Naive thymus-derived CD4-positive, alpha-beta T cell (primary cell): ENCODE measurements at regions of chr5 and their contacts with region 1.

Region 1: DNA sequence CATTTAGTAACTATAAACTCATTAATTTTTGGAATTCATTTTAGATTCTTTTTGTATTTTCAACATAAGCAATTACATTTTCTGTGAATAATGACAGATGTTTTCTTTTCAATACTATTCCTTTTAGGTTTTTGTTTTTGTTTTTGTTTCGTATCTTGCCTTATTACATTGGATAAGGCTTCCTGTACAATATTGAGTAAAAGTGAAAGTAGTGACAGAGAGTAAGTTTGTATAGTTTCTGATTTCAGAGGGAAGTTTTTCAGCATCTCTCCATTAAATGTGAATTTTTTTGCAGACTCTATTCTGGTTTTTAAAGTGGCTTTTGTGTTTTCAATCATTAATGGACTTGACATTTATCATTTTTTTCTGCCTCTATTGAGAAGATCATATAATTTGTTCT is 12.8 kb upstream of the CAMK4 start:
- DNase-seq: no peak
- ATAC-seq: no peak
- H3K4me3 ChIP-seq: no peak overlapping the region
- H3K4me3 Mint-ChIP-seq: peak overlapping the region in 9 of 10 donors; percentile 2 to 76 (median 66)
- H3K27ac ChIP-seq: no peak overlapping the region
- H3K27ac Mint-ChIP-seq: peak overlapping the region in 4 of 9 donors; percentile 7 to 47 (median 19)
- H3K4me1 ChIP-seq: no peaks in the 10 kb centered on the region
- H3K4me1 Mint-ChIP-seq: peaks cover 3 to 43% (median 32%) of the 10 kb centered on the region in 7 donors
- H3K27me3 ChIP-seq: no peaks in the 10 kb centered on the region
- H3K27me3 Mint-ChIP-seq: no peaks in the 10 kb centered on the region

Region 2: GRCh38 chr5:111169269-111169668 is 42.1 kb before region 1 on chr5:
- CTCF ChIA-PET with region 1: no interaction called
- POLR2A ChIA-PET with region 1: no interaction called
- intact Hi-C with region 1: loop called in 1 of 2 experiments (anchors 5 kb)
- DNase-seq: no peak
- ATAC-seq: no peak
- H3K4me3 ChIP-seq: no peak overlapping the region
- H3K4me3 Mint-ChIP-seq: no peak overlapping the region
- H3K27ac ChIP-seq: no peak overlapping the region
- H3K27ac Mint-ChIP-seq: no peak overlapping the region
- H3K4me1 ChIP-seq: no peaks in the 10 kb centered on the region
- H3K4me1 Mint-ChIP-seq: peaks cover 0 to 29% (median 11%) of the 10 kb centered on the region in 7 donors
- H3K27me3 ChIP-seq: no peaks in the 10 kb centered on the region
- H3K27me3 Mint-ChIP-seq: peaks cover 0 to 3% (median 0%) of the 10 kb centered on the region in 5 donors

Region 3: DNA sequence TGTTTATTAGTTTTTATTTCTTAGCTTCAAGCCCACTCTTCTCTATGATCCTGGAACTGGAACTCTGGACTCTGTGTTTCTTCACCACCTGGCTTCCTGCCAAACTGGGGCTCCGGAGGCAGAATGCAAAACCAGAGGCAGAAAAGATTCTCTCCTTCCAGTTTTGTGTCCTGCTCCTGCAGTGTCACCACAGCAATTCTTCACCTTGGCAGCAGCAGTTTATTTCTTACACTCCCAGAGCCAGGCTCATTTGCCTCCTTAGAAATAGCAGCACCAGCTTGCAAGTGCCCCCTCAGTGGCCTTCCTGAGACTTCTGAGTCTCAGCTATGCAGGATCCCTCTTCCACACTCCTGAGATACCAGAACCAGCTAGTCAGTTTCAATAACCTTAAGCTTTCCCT is 13.8 kb before region 1 on chr5:
- CTCF ChIA-PET with region 1: no interaction called
- POLR2A ChIA-PET with region 1: interaction called, 3 read pairs
- intact Hi-C with region 1: loop called (anchors 2 kb)
- DNase-seq: no peak
- ATAC-seq: no peak
- H3K4me3 ChIP-seq: no peak overlapping the region
- H3K4me3 Mint-ChIP-seq: no peak overlapping the region
- H3K27ac ChIP-seq: no peak overlapping the region
- H3K27ac Mint-ChIP-seq: no peak overlapping the region
- H3K4me1 ChIP-seq: no peaks in the 10 kb centered on the region
- H3K4me1 Mint-ChIP-seq: peaks cover 0 to 13% (median 8%) of the 10 kb centered on the region in 7 donors
- H3K27me3 ChIP-seq: no peaks in the 10 kb centered on the region
- H3K27me3 Mint-ChIP-seq: peaks cover 0 to 30% (median 0%) of the 10 kb centered on the region in 5 donors